Endothelial cell of umbilical vein (primary cell): ENCODE measurements at regions of chr17 and their contacts with region 1.

Region 1: DNA sequence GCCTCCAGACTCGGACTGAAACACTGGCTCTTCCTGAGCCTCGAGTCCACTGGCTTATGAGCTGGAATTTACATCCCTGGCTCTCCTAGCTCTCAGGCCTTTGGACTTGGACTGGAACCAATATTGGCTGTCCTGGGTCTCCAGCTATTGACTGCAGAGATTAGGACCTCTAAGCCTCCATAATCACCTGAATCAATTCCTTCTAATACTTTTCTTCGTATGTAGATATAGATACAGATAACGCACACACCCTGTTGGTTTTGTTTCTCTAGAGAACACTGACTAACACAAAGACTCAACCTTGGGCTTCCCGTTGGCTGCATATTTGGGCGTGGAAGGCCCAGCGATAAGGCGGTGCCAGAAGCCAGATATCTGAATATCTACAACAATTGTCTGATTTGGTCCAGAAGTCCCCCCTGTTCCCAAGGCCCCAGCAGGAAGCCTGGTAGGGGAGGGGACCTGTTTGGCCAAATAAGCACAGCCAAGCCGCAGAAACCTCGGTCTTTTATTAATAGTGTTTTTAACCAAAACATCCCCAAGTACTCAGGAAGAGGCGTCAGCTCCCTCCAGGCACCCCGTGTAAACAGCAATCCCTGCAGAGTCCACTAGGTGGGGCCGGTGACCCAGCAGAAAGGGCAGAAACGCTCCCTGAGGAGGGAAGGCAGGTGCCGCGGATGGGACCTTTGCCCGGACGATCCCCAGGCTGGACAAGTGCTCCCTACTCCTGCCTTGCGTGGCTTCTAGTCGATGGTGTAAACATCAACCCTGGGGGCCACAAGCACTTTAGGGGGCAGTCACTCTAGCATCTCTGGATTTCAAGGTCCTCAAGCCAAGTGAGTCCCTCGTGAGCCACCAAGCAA is 57.0 kb downstream of the ABR start:
- DNase-seq: peak; percentile 89
- H3K4me3 ChIP-seq: no peak overlapping the region
- H3K27ac ChIP-seq: peak overlapping the region; percentile 68
- H3K4me1 ChIP-seq: peaks cover 13% of the 10 kb centered on the region
- H3K27me3 ChIP-seq: no peaks in the 10 kb centered on the region
- CTCF ChIP-seq: peak; percentile 89
- POLR2A ChIP-seq: no peak

Region 2: DNA sequence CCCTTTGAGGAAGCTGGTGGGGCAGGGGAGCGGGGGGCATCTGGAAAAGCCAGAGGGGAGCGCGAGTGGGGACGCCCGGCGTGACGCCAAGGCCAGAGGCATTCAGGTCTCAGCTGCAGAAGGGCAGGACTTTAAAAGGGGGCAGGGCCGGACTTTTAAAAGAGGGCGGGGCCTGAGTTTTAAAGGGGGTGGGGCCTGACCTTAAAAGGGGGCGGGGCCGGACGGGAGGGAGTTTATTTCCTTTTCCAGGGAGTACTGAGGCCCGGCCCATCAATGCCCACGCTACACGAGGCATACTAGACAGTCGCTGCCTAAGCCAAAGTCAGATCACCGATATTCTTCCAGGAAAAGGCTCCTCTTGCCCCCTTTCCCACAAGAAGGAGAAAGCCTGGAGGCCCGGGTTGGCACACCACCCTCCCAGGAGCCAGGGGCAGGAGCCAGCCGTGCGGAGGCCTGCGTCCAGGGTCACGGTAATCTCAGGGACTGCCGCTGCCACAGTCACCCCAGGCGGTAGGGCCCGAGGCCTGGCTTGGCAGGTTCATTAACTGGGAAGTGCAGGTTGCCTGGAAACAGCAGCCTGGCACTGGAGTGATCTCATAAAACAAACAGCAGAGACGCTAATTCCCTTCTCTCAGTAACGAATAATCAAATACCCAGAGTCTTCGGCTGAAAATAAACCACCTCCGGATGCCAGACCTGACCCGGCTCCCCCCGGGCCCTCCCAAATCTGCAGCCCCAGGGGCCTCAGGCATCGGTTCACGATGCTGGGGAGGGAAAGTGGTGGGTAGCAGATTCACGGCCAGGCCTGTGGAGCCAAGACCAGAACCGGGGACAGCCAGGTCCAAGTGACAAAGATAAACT is 35.2 kb before region 1 on chr17:
- CTCF ChIA-PET with region 1: interaction called, 14 read pairs
- POLR2A ChIA-PET with region 1: no interaction called
- dilution Hi-C with region 1: no loop called
- intact Hi-C with region 1: loop called (anchors 5 kb)
- DNase-seq: peak; percentile 84
- H3K4me3 ChIP-seq: peak overlapping the region in 1 of 3 experiments; percentile 9
- H3K27ac ChIP-seq: peak overlapping the region; percentile 95
- H3K4me1 ChIP-seq: peaks cover 25% of the 10 kb centered on the region
- H3K27me3 ChIP-seq: no peaks in the 10 kb centered on the region
- CTCF ChIP-seq: no peak
- POLR2A ChIP-seq: no peak

Region 3: GRCh38 chr17:1137465-1137894 is 14.7 kb after region 1 on chr17:
- CTCF ChIA-PET with region 1: interaction called, 34 read pairs
- POLR2A ChIA-PET with region 1: no interaction called
- dilution Hi-C with region 1: no loop called
- intact Hi-C with region 1: no loop called
- DNase-seq: peak; percentile 34
- H3K4me3 ChIP-seq: no peak overlapping the region
- H3K27ac ChIP-seq: no peak overlapping the region
- H3K4me1 ChIP-seq: peaks cover 8% of the 10 kb centered on the region
- H3K27me3 ChIP-seq: no peaks in the 10 kb centered on the region
- CTCF ChIP-seq: no peak
- POLR2A ChIP-seq: no peak

Region 4: DNA sequence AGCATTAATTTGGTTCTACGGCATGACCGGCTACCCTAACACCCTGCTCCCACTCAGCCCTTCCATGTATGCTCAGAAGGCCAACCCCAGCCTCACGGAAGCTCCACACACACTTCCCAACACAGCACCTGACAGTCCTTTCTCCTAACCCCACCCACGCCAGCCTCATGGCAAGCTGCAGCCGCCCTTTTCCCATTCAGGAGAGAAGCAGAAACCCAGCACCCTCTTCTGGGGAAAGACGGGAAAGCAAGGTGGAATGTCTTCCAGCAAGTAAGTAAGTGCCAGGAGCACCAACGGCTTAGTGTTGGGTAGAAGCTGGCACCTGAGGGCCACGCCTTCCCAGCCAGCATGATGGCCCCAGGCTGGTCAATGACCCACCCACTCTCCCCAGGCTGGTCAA is 24.9 kb after region 1 on chr17:
- CTCF ChIA-PET with region 1: interaction called, 106 read pairs
- POLR2A ChIA-PET with region 1: no interaction called
- dilution Hi-C with region 1: no loop called
- intact Hi-C with region 1: loop called (anchors 1 kb)
- DNase-seq: peak; percentile 80
- H3K4me3 ChIP-seq: no peak overlapping the region
- H3K27ac ChIP-seq: no peak overlapping the region
- H3K4me1 ChIP-seq: no peaks in the 10 kb centered on the region
- H3K27me3 ChIP-seq: no peaks in the 10 kb centered on the region
- CTCF ChIP-seq: peak; percentile 48 to 72
- POLR2A ChIP-seq: no peak

Region 5: DNA sequence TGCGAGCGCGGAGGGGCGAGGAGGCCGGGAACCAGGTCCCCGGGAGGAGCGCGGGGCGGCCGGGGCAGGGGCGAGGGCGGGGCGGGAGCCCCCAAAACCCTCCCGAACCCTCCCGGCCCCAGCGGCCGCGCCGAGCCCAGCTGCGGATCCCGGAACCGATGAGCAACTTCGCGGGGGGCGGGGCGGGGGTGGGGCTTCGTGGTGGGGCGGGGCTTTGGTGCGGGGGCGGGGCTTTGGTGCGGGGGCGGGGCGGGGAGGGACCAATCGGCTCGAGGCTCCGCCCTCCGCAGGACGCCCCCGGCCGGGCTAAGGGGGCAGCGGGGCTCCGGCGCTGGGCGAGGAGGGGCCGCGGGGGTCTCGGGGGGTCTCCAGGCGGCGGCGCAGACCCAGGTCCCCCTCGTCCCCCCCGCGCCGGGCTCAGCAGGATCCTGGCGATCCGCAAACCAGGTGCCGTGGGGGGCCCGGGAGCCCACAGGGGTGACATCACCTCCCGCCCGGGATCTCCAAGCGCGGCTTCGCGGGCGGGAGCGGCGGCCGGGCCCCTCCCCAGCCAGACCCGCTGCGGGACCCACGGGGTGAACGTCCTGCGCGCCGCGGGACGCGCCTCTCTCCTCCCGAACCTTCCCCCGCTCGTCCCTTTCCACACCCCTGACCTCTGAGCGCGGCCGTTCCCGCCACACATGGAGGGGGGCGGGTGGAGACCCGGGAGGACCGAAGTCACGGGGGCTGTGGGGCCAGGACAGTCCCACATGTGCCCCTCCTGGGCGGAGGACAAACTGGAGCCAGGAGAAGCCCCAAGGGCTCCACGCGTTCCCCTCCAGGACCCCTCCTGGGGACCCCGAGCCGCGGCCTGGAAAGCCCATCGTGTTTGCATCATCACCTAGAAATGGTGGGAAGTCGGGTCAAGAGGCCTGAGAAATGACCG is 57.3 kb after region 1 on chr17 and contains the start of gene ABR:
- CTCF ChIA-PET with region 1: interaction called, 175 read pairs
- POLR2A ChIA-PET with region 1: no interaction called
- dilution Hi-C with region 1: no loop called
- intact Hi-C with region 1: no loop called
- DNase-seq: peak; percentile 33
- H3K4me3 ChIP-seq: peak within 1 kb of the TSS; percentile 53 to 82 (median 77)
- H3K27ac ChIP-seq: no peak within 1 kb of the TSS
- H3K4me1 ChIP-seq: peaks cover 7% of the 10 kb centered on the region
- H3K27me3 ChIP-seq: no peaks in the 10 kb centered on the region
- CTCF ChIP-seq: no peak
- POLR2A ChIP-seq: no peak
- total RNA-seq, gene ABR: 78.9 and 96.8 TPM in 2 replicates

Region 6: GRCh38 chr17:1197781-1198490 is 75.2 kb after region 1 on chr17:
- CTCF ChIA-PET with region 1: interaction called, 29 read pairs
- POLR2A ChIA-PET with region 1: no interaction called
- dilution Hi-C with region 1: no loop called
- intact Hi-C with region 1: no loop called
- DNase-seq: no peak
- H3K4me3 ChIP-seq: no peak overlapping the region
- H3K27ac ChIP-seq: no peak overlapping the region
- H3K4me1 ChIP-seq: no peaks in the 10 kb centered on the region
- H3K27me3 ChIP-seq: no peaks in the 10 kb centered on the region
- CTCF ChIP-seq: no peak
- POLR2A ChIP-seq: no peak

Region 7: DNA sequence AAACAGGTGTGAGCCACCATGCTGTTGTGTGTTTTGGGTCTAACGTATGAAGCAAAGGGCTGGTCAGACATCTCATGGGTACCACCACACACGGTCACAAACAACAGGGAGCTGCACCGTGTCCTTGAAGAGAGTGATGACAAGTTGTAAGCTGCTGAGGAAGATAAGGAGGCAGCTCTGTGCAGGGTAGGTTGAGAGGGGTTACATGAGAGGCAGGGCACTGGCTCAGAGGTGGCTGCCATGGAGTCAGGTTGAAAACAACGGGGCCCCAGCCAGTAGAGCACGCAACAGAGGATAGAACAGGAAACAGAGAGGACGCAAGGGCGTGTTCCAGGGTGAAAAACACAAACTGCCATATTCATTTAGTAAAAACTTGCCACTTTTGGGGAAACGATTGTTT is 208.9 kb after region 1 on chr17:
- CTCF ChIA-PET with region 1: interaction called, 14 read pairs
- POLR2A ChIA-PET with region 1: no interaction called
- dilution Hi-C with region 1: no loop called
- intact Hi-C with region 1: loop called (anchors 1 kb)
- DNase-seq: no peak
- H3K4me3 ChIP-seq: no peak overlapping the region
- H3K27ac ChIP-seq: no peak overlapping the region
- H3K4me1 ChIP-seq: no peaks in the 10 kb centered on the region
- H3K27me3 ChIP-seq: no peaks in the 10 kb centered on the region
- CTCF ChIP-seq: no peak
- POLR2A ChIP-seq: no peak